IMR-90 (cell line): ENCODE measurements at regions of chr5 and their contacts with region 1.

Region 1: GRCh38 chr5:144203750-144204596 is 33.3 kb downstream of the KCTD16 start:
- DNase-seq: peak; percentile 82
- ATAC-seq: peak; percentile 65
- H3K4me3 ChIP-seq: no peak overlapping the region
- H3K27ac ChIP-seq: no peak overlapping the region
- H3K4me1 ChIP-seq: 0 out of 2 replicates have a peak, but pooled peaks cover 2% of the 10 kb centered on the region
- H3K27me3 ChIP-seq: peaks cover 12% of the 10 kb centered on the region
- CTCF ChIP-seq: peak; percentile 94
- POLR2A ChIP-seq: no peak
- RAD21 ChIP-seq: peak; percentile 88

Region 2: DNA sequence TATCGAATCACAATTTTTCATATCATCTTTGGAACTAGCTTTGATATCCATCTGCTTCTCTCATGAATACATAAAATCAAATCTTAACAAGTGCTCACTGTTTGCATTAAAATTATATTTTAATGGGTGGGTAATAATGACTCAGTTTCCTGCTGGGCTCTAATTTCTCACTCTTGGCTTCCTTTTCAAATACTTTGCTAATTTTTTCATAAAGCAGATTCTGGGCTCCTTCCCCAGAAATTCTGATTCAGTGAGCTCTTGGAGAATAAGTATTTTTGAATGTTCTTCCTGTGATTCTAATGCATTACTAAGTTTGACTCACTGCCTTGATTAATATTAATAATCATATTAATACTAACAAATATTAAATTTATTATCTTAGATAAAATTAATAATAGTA is 82.4 kb before region 1 on chr5:
- CTCF ChIA-PET with region 1: no interaction called
- POLR2A ChIA-PET with region 1: no interaction called
- dilution Hi-C with region 1: no loop called
- in situ Hi-C with region 1: no loop called
- intact Hi-C with region 1: no loop called
- DNase-seq: peak; percentile 54
- ATAC-seq: no peak
- H3K4me3 ChIP-seq: no peak overlapping the region
- H3K27ac ChIP-seq: no peak overlapping the region
- H3K4me1 ChIP-seq: peaks cover 6% of the 10 kb centered on the region
- H3K27me3 ChIP-seq: no peaks in the 10 kb centered on the region
- CTCF ChIP-seq: no peak
- POLR2A ChIP-seq: no peak
- RAD21 ChIP-seq: no peak

Region 3: GRCh38 chr5:144187699-144188294 is 16.2 kb before region 1 on chr5:
- CTCF ChIA-PET with region 1: no interaction called
- POLR2A ChIA-PET with region 1: no interaction called
- dilution Hi-C with region 1: no loop called
- in situ Hi-C with region 1: no loop called
- intact Hi-C with region 1: no loop called
- DNase-seq: peak; percentile 99
- ATAC-seq: peak; percentile 68
- H3K4me3 ChIP-seq: no peak overlapping the region
- H3K27ac ChIP-seq: peak overlapping the region; percentile 34; the same call in 1 of the 2 replicates
- H3K4me1 ChIP-seq: peaks cover 6% of the 10 kb centered on the region; the same call in 1 of the 2 replicates
- H3K27me3 ChIP-seq: no peaks in the 10 kb centered on the region
- CTCF ChIP-seq: no peak
- POLR2A ChIP-seq: no peak
- RAD21 ChIP-seq: no peak

Region 4: GRCh38 chr5:144390133-144390532 is 186.2 kb after region 1 on chr5:
- CTCF ChIA-PET with region 1: interaction called, 4 read pairs
- POLR2A ChIA-PET with region 1: no interaction called
- dilution Hi-C with region 1: no loop called
- in situ Hi-C with region 1: no loop called
- intact Hi-C with region 1: loop called (anchors 2 kb)
- DNase-seq: peak; percentile 0
- ATAC-seq: peak; percentile 66; the same call in 1 of the 2 replicates
- H3K4me3 ChIP-seq: no peak overlapping the region
- H3K27ac ChIP-seq: no peak overlapping the region
- H3K4me1 ChIP-seq: no peaks in the 10 kb centered on the region
- H3K27me3 ChIP-seq: no peaks in the 10 kb centered on the region
- CTCF ChIP-seq: peak; percentile 41
- POLR2A ChIP-seq: no peak
- RAD21 ChIP-seq: peak; percentile 40; the same call in 1 of the 2 replicates

Region 5: DNA sequence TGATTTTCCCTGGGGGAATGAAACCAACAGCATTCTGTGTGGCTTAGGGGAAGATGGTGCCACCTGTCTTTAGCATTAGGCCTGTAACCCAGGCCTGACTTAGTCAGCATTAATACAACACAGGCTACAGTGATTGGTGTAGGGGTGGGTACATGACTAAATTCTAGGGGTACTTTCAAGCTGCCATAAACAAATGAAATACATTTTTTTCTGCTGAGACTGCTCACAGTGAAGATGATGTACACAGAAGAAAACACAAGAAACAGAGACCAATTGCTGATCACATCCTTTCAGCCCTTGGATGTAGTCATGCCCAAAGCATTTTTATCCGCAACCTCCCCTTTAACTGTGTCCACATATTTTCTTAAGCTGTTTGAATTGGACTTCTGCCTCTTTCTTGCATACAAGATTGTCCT is 493.9 kb after region 1 on chr5:
- CTCF ChIA-PET with region 1: interaction called, 4 read pairs
- POLR2A ChIA-PET with region 1: no interaction called
- dilution Hi-C with region 1: no loop called
- in situ Hi-C with region 1: no loop called
- intact Hi-C with region 1: loop called (anchors 2 kb)
- DNase-seq: peak; percentile 97
- ATAC-seq: peak; percentile 97
- H3K4me3 ChIP-seq: no peak overlapping the region
- H3K27ac ChIP-seq: no peak overlapping the region
- H3K4me1 ChIP-seq: peaks cover 2% of the 10 kb centered on the region; the same call in 1 of the 2 replicates
- H3K27me3 ChIP-seq: no peaks in the 10 kb centered on the region
- CTCF ChIP-seq: peak; percentile 36
- POLR2A ChIP-seq: no peak
- RAD21 ChIP-seq: peak; percentile 5; the same call in 1 of the 2 replicates

Region 6: GRCh38 chr5:145347026-145347616 is 1143.1 kb after region 1 on chr5:
- CTCF ChIA-PET with region 1: interaction called, 5 read pairs
- POLR2A ChIA-PET with region 1: no interaction called
- dilution Hi-C with region 1: no loop called
- in situ Hi-C with region 1: loop called (anchors 25 kb)
- intact Hi-C with region 1: loop called (anchors 2 kb)
- DNase-seq: peak; percentile 72
- ATAC-seq: peak; percentile 83
- H3K4me3 ChIP-seq: no peak overlapping the region
- H3K27ac ChIP-seq: no peak overlapping the region
- H3K4me1 ChIP-seq: peaks cover 13% of the 10 kb centered on the region
- H3K27me3 ChIP-seq: no peaks in the 10 kb centered on the region
- CTCF ChIP-seq: peak; percentile 67
- POLR2A ChIP-seq: no peak
- RAD21 ChIP-seq: peak; percentile 71

Region 7: GRCh38 chr5:145568581-145568980 is 1364.6 kb after region 1 on chr5:
- CTCF ChIA-PET with region 1: no interaction called
- POLR2A ChIA-PET with region 1: no interaction called
- dilution Hi-C with region 1: no loop called
- in situ Hi-C with region 1: no loop called
- intact Hi-C with region 1: no loop called
- DNase-seq: peak; percentile 66
- ATAC-seq: peak; percentile 66
- H3K4me3 ChIP-seq: no peak overlapping the region
- H3K27ac ChIP-seq: no peak overlapping the region
- H3K4me1 ChIP-seq: no peaks in the 10 kb centered on the region; the same call in 1 of the 2 replicates
- H3K27me3 ChIP-seq: no peaks in the 10 kb centered on the region
- CTCF ChIP-seq: no peak
- POLR2A ChIP-seq: no peak
- RAD21 ChIP-seq: no peak

Region 8: DNA sequence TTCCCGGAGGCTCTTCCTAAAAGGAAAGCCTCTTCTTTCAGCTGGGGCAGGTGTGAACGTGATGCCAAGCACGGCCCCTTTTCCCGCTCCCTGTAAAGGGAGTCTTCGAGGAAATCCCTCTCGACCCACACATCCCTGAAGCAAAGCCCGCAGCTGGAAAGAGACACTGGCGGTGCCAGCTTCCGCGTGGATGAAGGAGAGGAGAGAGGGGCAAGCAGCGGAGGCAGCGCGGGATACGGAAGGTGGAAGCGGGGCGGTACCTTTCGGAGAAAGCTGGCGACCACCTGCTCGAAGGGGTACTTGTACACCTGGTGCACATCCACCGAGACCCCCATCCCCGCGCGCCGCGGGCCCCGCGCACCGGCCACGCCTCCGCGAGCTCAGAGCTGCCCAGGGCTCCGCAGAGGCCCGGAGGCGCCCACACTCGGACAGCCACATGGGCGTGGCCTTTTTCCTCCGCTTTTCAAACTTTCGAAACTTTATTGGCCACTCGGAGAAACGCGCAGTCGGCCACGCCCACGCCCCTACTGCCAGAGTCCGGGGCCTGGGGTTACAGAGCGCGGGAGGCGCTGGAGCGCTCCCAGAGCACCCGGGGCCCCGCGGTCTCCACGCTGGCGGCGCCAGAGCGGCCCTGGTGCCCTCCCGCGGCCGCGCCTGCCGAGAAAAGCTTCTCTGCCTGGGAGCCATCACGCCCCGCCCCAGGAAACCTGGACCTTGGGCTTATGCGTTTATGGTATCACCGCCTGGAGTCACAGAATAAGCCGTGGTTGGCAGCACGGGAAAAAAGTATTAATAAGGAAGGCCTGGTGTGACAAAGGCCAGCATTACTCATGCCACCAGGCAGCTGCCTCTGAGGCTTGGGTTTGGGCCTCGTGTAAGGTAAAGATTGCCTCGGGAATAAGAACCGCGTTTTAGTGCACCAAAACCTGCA is 1631.2 kb after region 1 on chr5 and contains the start of gene PRELID2:
- CTCF ChIA-PET with region 1: no interaction called
- POLR2A ChIA-PET with region 1: no interaction called
- dilution Hi-C with region 1: no loop called
- in situ Hi-C with region 1: loop called (anchors 5 kb)
- intact Hi-C with region 1: no loop called
- DNase-seq: peak; percentile 84
- ATAC-seq: peak; percentile 91
- H3K4me3 ChIP-seq: peak within 1 kb of the TSS; percentile 60
- H3K27ac ChIP-seq: peak within 1 kb of the TSS; percentile 13
- H3K4me1 ChIP-seq: peaks cover 5% of the 10 kb centered on the region
- H3K27me3 ChIP-seq: no peaks in the 10 kb centered on the region
- CTCF ChIP-seq: 0 out of 2 replicates have a peak, but pooled peaks have one; percentile 3
- POLR2A ChIP-seq: peak; percentile 52; the same call in 1 of the 2 replicates
- RAD21 ChIP-seq: peak; percentile 7; the same call in 1 of the 2 replicates
- total RNA-seq, gene PRELID2: 8.6 and 13.9 TPM in 2 replicates

Region 9: GRCh38 chr5:146124580-146124979 is 1920.6 kb after region 1 on chr5:
- CTCF ChIA-PET with region 1: no interaction called
- POLR2A ChIA-PET with region 1: no interaction called
- dilution Hi-C with region 1: no loop called
- in situ Hi-C with region 1: no loop called
- intact Hi-C with region 1: loop called (anchors 10 kb)
- DNase-seq: no peak
- ATAC-seq: no peak
- H3K4me3 ChIP-seq: no peak overlapping the region
- H3K27ac ChIP-seq: no peak overlapping the region
- H3K4me1 ChIP-seq: no peaks in the 10 kb centered on the region
- H3K27me3 ChIP-seq: no peaks in the 10 kb centered on the region
- CTCF ChIP-seq: no peak
- POLR2A ChIP-seq: no peak
- RAD21 ChIP-seq: no peak